Calu3 (cell line): ENCODE measurements at regions of chr5 and their contacts with region 1.

Region 1: DNA sequence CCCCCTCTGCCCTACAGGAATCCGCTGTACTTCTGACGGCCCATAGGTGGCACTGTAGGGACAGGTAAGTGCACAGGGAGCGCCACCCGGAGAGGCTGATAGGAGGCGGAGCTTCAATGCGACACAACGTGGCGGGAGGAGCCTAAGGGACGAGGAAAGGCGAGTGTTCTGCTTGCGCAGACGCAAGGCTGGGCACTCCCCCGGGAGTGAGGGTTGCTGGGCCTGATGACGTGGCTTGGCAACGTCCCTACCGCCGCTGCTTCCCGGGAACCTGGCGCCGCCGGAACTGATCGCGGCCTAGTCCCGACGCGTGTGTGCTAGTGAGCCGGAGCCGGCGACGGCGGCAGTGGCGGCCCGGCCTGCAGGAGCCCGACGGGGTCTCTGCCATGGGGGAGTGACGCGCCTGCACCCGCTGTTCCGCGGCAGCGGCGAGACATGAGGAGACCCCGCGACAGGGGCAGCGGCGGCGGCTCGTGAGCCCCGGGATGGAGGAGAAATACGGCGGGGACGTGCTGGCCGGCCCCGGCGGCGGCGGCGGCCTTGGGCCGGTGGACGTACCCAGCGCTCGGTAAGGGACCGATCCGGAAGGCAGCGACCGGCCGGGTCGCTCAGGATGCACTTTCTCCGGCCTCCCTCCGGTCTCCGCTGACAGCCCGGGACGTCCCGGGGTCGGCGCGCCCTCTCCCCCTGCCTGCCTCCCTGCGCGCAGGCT is at the start of gene SLC30A5:
- DNase-seq: peak; percentile 98
- H3K4me3 Mint-ChIP-seq: peak within 1 kb of the TSS; percentile 92
- H3K27ac Mint-ChIP-seq: peak within 1 kb of the TSS; percentile 90
- H3K4me1 Mint-ChIP-seq: no peaks in the 10 kb centered on the region
- H3K27me3 Mint-ChIP-seq: no peaks in the 10 kb centered on the region
- CTCF ChIP-seq: peak; percentile 76
- total RNA-seq, gene SLC30A5: 45.9 and 51.0 TPM in 2 replicates

Region 2: DNA sequence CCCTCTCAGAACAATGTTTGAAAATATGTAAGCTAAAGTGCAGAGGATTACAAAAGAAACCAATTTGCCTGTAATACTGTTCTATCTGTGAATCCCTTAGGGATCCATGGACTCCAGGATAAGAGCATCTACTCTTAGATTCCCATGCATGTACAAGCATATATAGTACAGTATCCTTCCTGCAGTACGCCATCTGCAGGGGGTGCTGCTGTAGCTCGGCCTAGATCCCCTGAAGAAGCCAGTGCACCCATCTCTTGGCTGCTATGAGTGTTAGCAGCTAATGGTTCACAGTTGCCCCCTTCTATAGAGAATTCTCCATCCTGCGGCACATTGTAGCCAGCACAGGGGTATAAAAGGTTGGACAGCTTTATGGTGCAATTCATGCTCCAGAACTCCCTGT is 61.9 kb before region 1 on chr5:
- CTCF ChIA-PET with region 1: no interaction called
- intact Hi-C with region 1: no loop called
- DNase-seq: no peak
- H3K4me3 Mint-ChIP-seq: no peak overlapping the region
- H3K27ac Mint-ChIP-seq: no peak overlapping the region
- H3K4me1 Mint-ChIP-seq: no peaks in the 10 kb centered on the region
- H3K27me3 Mint-ChIP-seq: no peaks in the 10 kb centered on the region
- CTCF ChIP-seq: no peak

Region 3: DNA sequence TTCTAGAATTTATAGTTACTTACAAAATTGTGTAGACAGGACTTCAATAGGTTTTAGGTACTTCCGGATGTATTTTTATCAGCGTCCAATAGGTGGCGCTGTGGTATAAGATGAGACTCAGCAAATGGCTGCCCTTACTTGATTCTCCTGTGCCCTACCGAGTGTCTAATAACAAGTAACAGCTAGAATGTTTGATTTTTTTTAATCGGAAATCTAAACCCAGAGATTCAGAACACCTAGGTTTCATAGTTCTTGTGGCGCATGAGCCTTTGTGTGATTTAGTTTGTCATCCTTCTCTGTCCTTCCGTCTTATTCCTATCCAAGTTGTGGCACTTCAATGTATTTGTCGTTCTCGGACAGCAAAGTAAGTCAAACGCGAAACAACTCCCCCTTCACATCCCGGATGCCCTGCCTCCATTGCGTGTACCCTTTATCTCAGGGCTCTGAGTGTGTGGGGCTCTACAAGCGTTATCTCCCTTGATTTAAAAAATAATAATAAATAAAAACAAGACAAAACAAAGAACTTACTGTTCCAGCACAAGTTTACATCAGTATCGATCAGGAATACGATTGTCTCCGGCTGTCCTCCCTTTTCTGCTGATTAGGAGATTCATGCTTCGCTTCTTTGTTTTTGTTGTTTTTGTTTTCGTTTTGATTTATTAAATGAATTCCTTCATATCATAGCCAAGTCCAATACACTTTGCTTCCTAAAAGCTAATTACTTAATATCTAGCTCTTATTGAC is 50.8 kb before region 1 on chr5:
- CTCF ChIA-PET with region 1: interaction called, 14 read pairs
- intact Hi-C with region 1: no loop called
- DNase-seq: peak; percentile 83
- H3K4me3 Mint-ChIP-seq: peak overlapping the region; percentile 77
- H3K27ac Mint-ChIP-seq: peak overlapping the region; percentile 43
- H3K4me1 Mint-ChIP-seq: peaks cover 21% of the 10 kb centered on the region
- H3K27me3 Mint-ChIP-seq: no peaks in the 10 kb centered on the region
- CTCF ChIP-seq: peak; percentile 72

Region 4: GRCh38 chr5:69166686-69167492 is 73.0 kb after region 1 on chr5 and contains the start of gene CCNB1:
- CTCF ChIA-PET with region 1: interaction called, 4 read pairs
- intact Hi-C with region 1: loop called (anchors 10 kb)
- DNase-seq: peak; percentile 99
- H3K4me3 Mint-ChIP-seq: peak within 1 kb of the TSS; percentile 98
- H3K27ac Mint-ChIP-seq: peak within 1 kb of the TSS; percentile 93
- H3K4me1 Mint-ChIP-seq: peaks cover 13% of the 10 kb centered on the region
- H3K27me3 Mint-ChIP-seq: no peaks in the 10 kb centered on the region
- CTCF ChIP-seq: no peak
- total RNA-seq, gene CCNB1: 162 and 192 TPM in 2 replicates

Region 5: DNA sequence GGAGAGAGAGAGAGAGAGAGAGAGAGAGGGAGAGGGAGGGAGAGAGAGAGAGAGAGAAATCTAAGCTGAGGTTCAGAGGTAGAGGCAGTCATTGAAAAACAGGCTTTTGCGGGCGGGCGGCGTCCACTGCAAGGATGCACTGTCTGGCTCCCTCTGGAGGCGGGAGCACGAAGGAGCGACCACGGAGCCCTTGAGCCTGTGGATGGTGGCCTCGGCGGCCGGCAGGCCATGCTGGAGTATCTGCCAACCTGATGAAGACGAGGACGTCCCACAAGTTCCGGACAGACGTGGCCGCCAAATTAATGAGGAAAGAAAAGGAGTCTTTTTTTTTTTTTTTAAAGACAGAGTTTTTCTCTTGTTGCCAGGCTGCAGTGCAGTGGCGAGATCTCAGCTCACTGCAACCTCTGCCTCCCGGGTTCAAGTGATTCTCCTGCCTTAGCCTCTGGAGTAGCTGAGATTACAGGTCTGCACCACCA is 240.9 kb after region 1 on chr5:
- CTCF ChIA-PET with region 1: interaction called, 17 read pairs
- intact Hi-C with region 1: no loop called
- DNase-seq: peak; percentile 90
- H3K4me3 Mint-ChIP-seq: no peak overlapping the region
- H3K27ac Mint-ChIP-seq: no peak overlapping the region
- H3K4me1 Mint-ChIP-seq: peaks cover 28% of the 10 kb centered on the region
- H3K27me3 Mint-ChIP-seq: no peaks in the 10 kb centered on the region
- CTCF ChIP-seq: peak; percentile 67